Naive thymus-derived CD4-positive, alpha-beta T cell (primary cell): ENCODE measurements at regions of chr9 and their contacts with region 1.

Region 1: DNA sequence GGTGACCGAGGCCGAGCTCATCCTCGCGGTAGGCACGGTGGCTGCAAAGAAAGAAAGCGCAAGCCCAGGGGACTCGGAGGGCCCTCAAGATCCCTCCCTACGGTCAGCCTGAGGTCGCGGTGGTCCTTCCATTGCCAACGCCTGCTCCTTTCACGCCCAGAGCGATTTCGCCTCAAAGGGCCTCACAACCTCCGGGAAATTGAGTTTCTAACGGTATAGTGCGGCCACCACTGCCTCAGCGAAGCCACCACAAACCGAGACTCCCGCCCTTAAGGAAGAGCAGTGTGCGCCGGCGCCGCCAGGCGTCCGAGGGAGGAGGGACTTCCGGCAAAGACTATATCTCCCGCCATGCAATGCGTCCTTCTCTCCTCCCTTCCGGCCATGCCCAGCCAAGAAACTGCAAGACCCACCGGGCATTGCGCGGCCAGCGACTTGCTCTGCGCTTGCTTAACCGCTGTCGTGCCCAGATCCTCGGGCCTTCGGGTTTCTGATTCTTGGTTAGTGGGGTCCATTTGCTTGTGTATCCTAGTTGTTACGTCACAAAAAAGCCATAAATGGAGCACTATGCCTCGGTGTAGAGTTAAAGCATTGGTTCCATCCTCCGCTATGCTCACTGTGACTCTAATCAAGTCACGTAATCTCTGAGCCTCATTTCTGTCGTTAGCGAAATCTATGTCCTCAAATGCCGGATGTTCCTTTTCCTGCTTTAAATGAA is at the start of gene HAUS6:
- DNase-seq: peak; percentile 79 to 97 (median 95)
- ATAC-seq: peak; percentile 98
- H3K4me3 ChIP-seq: peak within 1 kb of the TSS; percentile 62
- H3K4me3 Mint-ChIP-seq: peak within 1 kb of the TSS; percentile 90 to 98 (median 94)
- H3K27ac ChIP-seq: peak within 1 kb of the TSS; percentile 86
- H3K27ac Mint-ChIP-seq: peak within 1 kb of the TSS; percentile 88 to 99 (median 96)
- H3K4me1 ChIP-seq: peaks cover 4 to 9% of the 10 kb centered on the region in 2 donors
- H3K4me1 Mint-ChIP-seq: peaks cover 13 to 43% (median 25%) of the 10 kb centered on the region in 7 donors
- H3K27me3 ChIP-seq: no peaks in the 10 kb centered on the region
- H3K27me3 Mint-ChIP-seq: no peaks in the 10 kb centered on the region
- total RNA-seq, gene HAUS6: 11.4 to 25.4 (median 19.6) TPM

Region 2: DNA sequence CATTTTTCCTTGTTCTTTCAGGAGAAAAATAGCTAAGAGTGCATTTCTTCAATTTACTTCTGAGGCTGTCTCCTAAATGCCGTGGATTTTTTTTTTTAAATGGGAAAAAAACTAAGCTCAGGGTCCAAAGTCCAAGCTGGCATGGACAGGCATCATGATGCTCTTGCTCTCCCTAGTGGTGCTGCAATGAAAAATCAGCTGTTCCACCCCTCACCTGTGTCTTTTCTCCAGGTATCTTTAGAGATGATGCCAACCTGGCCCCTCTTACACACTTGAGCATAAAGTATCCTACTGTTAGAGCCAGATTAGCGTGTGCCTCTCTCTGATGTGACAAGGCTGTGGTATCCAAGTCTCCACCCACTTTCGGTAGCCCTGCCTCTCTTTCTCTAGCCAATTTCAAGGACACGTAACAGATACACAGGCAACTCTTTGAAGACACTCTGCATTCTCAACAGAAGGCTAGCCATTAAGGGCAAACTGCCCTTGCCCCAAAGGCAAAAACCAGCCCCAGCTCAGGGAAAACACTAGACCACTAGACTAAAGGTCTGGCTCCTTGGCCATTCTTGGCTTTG is 278.6 kb before region 1 on chr9:
- CTCF ChIA-PET with region 1: no interaction called
- POLR2A ChIA-PET with region 1: no interaction called
- intact Hi-C with region 1: no loop called
- DNase-seq: no peak
- ATAC-seq: no peak
- H3K4me3 ChIP-seq: no peak overlapping the region
- H3K4me3 Mint-ChIP-seq: no peak overlapping the region
- H3K27ac ChIP-seq: no peak overlapping the region
- H3K27ac Mint-ChIP-seq: peak overlapping the region in 1 of 9 donors; percentile 46
- H3K4me1 ChIP-seq: peaks cover 0 to 8% of the 10 kb centered on the region in 2 donors
- H3K4me1 Mint-ChIP-seq: peaks cover 9 to 32% (median 17%) of the 10 kb centered on the region in 7 donors
- H3K27me3 ChIP-seq: no peaks in the 10 kb centered on the region
- H3K27me3 Mint-ChIP-seq: peaks cover 0 to 4% (median 0%) of the 10 kb centered on the region in 5 donors

Region 3: GRCh38 chr9:19085295-19085694 is 17.5 kb before region 1 on chr9:
- CTCF ChIA-PET with region 1: no interaction called
- POLR2A ChIA-PET with region 1: interaction called, 4 read pairs
- intact Hi-C with region 1: loop called in 1 of 2 experiments (anchors 2 kb)
- DNase-seq: peak in 7 of 9 donors; percentile 31 to 60 (median 52)
- ATAC-seq: peak; percentile 83
- H3K4me3 ChIP-seq: no peak overlapping the region
- H3K4me3 Mint-ChIP-seq: no peak overlapping the region
- H3K27ac ChIP-seq: no peak overlapping the region
- H3K27ac Mint-ChIP-seq: no peak overlapping the region
- H3K4me1 ChIP-seq: no peaks in the 10 kb centered on the region
- H3K4me1 Mint-ChIP-seq: peaks cover 0 to 7% (median 5%) of the 10 kb centered on the region in 7 donors
- H3K27me3 ChIP-seq: no peaks in the 10 kb centered on the region
- H3K27me3 Mint-ChIP-seq: no peaks in the 10 kb centered on the region

Region 4: DNA sequence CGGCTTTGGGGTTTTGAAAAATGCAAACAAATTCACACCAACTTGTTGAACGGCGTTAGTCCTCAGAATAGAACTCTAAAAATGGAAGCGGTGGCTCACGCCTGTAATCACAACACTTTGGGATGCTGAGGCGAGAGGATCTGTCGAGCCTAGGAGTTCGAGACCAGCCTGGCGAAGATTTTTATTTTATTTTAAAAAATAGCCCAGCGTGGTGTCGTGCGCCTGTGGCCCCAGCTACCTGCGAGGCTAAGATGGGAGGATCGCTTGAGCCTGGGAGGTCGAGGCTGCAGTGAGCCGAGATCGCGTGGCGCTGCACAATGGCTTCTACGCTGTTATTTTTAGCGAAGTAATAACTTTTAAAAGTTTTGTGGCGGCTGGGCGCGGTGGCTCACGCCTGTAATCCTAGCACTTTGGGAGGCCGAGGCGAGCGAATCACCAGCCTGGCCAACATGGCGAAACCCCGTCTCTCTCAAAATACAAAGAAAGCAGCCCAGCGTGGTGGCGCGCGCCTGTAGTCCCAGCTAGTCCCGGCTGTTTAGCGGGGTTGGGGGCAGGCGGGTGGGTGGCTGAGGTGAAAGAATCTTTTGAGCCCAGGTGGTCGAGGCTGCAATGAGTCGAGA is 25.2 kb after region 1 on chr9:
- CTCF ChIA-PET with region 1: no interaction called
- POLR2A ChIA-PET with region 1: interaction called, 14 read pairs
- intact Hi-C with region 1: loop called (anchors 1 kb)
- DNase-seq: peak in 7 of 9 donors; percentile 12 to 44 (median 32)
- ATAC-seq: peak; percentile 44
- H3K4me3 ChIP-seq: peak overlapping the region; percentile 78
- H3K4me3 Mint-ChIP-seq: peak overlapping the region; percentile 80 to 96 (median 93)
- H3K27ac ChIP-seq: peak overlapping the region; percentile 94
- H3K27ac Mint-ChIP-seq: peak overlapping the region; percentile 60 to 97 (median 95)
- H3K4me1 ChIP-seq: peaks cover 24 to 26% of the 10 kb centered on the region in 2 donors
- H3K4me1 Mint-ChIP-seq: peaks cover 18 to 62% (median 48%) of the 10 kb centered on the region in 7 donors
- H3K27me3 ChIP-seq: no peaks in the 10 kb centered on the region
- H3K27me3 Mint-ChIP-seq: no peaks in the 10 kb centered on the region

Region 5: DNA sequence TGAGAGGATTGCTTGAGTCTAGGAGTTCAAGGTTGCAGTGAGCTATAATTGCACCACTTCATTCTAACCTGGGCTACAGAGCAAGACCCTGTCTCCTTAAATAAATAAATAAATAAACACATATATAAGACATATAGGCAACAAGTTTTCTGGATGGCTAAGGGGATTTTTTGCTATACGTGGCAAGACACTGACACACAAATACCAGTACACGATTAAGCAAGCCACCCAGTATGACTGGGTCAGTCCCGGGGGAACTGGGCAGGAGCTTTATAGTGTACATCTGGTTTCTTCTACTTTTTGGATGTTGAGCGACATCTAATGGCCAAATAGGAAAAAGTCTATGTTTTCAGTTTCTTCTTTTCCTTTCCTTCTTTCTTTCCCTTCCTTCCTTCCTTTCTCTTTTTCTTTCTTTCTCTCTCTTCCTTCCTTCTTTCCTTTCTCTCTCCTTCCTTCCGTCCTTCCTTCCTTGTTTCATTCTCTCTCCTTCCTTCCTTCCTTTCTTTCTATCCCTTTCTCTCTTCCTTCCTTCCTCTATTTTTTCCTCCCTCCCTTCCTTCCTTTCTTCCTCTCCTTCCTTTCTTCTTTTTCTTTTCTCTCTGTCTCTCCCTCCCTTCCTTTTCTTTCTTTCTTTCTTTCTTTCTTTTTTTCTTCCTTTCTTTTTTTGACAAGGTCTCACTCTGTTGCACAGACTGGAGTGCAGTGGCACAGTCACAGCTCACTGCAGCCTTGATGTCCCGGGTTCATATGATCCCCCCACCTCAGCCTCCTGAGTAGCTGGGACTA is 71.5 kb after region 1 on chr9:
- CTCF ChIA-PET with region 1: interaction called, 4 read pairs
- POLR2A ChIA-PET with region 1: no interaction called
- intact Hi-C with region 1: loop called (anchors 1 kb)
- DNase-seq: peak; percentile 11 to 51 (median 37)
- ATAC-seq: peak; percentile 91
- H3K4me3 ChIP-seq: no peak overlapping the region
- H3K4me3 Mint-ChIP-seq: peak overlapping the region in 3 of 10 donors; percentile 14 to 70 (median 63)
- H3K27ac ChIP-seq: no peak overlapping the region
- H3K27ac Mint-ChIP-seq: peak overlapping the region in 5 of 9 donors; percentile 52 to 84 (median 62)
- H3K4me1 ChIP-seq: peaks cover 5 to 16% of the 10 kb centered on the region in 2 donors
- H3K4me1 Mint-ChIP-seq: peaks cover 25 to 39% (median 31%) of the 10 kb centered on the region in 7 donors
- H3K27me3 ChIP-seq: no peaks in the 10 kb centered on the region
- H3K27me3 Mint-ChIP-seq: no peaks in the 10 kb centered on the region

Region 6: DNA sequence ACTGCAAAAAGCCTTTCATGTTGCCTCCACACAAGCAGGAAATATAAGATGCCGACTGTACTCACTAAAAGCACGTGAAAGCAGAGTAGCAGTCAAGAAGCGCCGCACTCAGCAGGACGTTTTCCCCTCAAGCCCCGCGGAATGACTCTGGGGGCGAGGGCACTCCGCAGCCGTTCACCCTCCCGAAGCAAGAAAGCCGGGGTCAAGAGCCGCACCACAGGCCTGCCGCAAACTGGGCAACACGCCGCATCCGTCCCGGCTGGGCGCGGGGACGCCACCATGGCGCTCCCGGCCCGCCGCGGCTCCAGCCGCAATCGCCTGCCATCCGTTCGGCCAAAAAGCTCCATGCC is 276.9 kb after region 1 on chr9:
- CTCF ChIA-PET with region 1: no interaction called
- POLR2A ChIA-PET with region 1: interaction called, 3 read pairs
- intact Hi-C with region 1: loop called (anchors 1 kb)
- DNase-seq: peak in 1 of 9 donors; percentile 39
- ATAC-seq: peak; percentile 59
- H3K4me3 ChIP-seq: peak overlapping the region; percentile 89
- H3K4me3 Mint-ChIP-seq: peak overlapping the region; percentile 92 to 99 (median 98)
- H3K27ac ChIP-seq: peak overlapping the region; percentile 84
- H3K27ac Mint-ChIP-seq: peak overlapping the region; percentile 97 to 100 (median 99)
- H3K4me1 ChIP-seq: peaks cover 13 to 24% of the 10 kb centered on the region in 2 donors
- H3K4me1 Mint-ChIP-seq: peaks cover 29 to 50% (median 41%) of the 10 kb centered on the region in 7 donors
- H3K27me3 ChIP-seq: no peaks in the 10 kb centered on the region
- H3K27me3 Mint-ChIP-seq: no peaks in the 10 kb centered on the region

Region 7: GRCh38 chr9:20684035-20684872 is 1581.5 kb after region 1 on chr9 and contains the start of gene FOCAD:
- CTCF ChIA-PET with region 1: no interaction called
- POLR2A ChIA-PET with region 1: no interaction called
- intact Hi-C with region 1: loop called in 1 of 2 experiments (anchors 2 kb)
- DNase-seq: peak; percentile 94 to 99 (median 96)
- ATAC-seq: peak; percentile 99
- H3K4me3 ChIP-seq: peak within 1 kb of the TSS; percentile 95
- H3K4me3 Mint-ChIP-seq: peak within 1 kb of the TSS; percentile 89 to 98 (median 96)
- H3K27ac ChIP-seq: peak within 1 kb of the TSS; percentile 81
- H3K27ac Mint-ChIP-seq: peak within 1 kb of the TSS; percentile 78 to 96 (median 92)
- H3K4me1 ChIP-seq: peaks cover 0 to 6% of the 10 kb centered on the region in 2 donors
- H3K4me1 Mint-ChIP-seq: peaks cover 11 to 29% (median 24%) of the 10 kb centered on the region in 7 donors
- H3K27me3 ChIP-seq: no peaks in the 10 kb centered on the region
- H3K27me3 Mint-ChIP-seq: no peaks in the 10 kb centered on the region
- total RNA-seq, gene FOCAD: 12.8 to 33.7 (median 22.3) TPM